ENCODE measurements at regions of chr3 and their contacts with region 1.

Region 1: DNA sequence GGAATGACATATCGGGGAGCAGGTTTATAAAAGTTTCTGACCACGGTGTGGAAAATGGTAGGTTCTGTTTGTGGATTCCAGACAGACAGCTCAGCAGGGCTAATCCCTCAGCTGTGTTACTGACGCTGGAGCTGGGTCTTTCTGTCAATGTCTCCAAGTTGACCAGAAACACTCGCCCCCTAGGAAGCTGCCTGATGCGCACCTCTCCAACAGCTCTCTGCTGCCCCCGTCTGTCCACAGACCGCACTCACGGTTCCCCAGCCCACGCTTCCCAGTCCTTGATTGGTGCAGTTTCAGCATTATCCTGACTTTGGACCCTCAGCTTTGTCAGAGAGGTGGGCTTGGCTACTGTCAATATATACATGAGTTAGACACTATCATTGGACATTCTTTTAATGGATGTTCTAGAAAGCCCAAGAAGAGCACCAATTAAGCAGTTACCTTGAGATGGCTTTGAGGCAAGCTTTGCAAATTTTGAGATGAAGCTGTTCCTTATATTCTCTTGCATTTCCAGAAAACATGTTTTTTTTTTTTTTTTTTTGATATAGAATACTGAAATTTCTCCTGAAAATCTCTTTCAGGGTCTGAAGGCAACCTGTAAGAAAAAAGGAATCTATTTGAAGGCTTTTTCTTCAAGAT is 98.9 kb upstream of the TBC1D5 start:
- DNase-seq: peak; percentile 46
- ATAC-seq: peak; percentile 99
- H3K4me3 ChIP-seq: no peak overlapping the region
- H3K27ac ChIP-seq: no peak overlapping the region
- H3K4me1 ChIP-seq: no peaks in the 10 kb centered on the region
- H3K27me3 ChIP-seq: peaks cover 2% of the 10 kb centered on the region
- CTCF ChIP-seq: peak; percentile 97
- POLR2A ChIP-seq: 0 out of 2 replicates have a peak, but pooled peaks have one; percentile 42
- RAD21 ChIP-seq: peak; percentile 96

Region 2: DNA sequence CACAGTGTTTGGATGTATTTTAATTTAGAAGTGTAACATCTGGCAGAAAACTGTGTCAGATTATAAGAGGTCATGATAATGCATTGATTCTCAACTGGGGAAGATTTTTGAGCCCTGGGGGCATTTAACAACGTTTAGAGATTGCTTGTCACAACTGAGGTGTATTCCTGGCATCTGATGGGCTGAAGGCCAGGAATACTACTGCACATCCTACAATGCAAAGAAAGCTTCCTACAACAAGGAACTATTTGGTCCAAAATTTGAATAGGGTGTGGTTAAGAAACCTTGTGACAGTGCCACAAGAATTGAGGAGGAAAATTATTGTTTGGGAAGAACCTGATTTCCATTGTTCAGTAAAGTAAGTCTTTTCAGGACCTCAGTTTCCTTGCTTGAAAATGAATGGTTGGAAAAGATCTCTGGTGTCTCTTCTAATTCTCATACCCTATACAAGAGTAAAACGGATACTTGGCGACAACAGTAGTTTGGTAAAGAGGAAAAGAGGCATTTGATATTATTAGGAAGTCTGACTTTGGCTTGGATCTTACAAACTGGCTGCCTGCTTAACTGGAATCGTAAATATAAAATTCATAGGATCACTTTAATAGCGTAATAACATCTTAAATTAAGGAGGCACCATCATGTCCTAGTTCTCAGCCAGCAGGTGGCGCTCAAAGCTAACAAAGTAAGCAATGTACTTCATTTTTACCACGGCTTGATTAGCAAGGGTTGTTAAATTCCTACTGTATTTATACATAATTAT is 1240.3 kb before region 1 on chr3:
- CTCF ChIA-PET with region 1: no interaction called
- POLR2A ChIA-PET with region 1: no interaction called
- dilution Hi-C with region 1: no loop called
- in situ Hi-C with region 1: no loop called
- intact Hi-C with region 1: loop called (anchors 5 kb)
- DNase-seq: peak; percentile 81
- ATAC-seq: peak; percentile 79
- H3K4me3 ChIP-seq: no peak overlapping the region
- H3K27ac ChIP-seq: no peak overlapping the region
- H3K4me1 ChIP-seq: no peaks in the 10 kb centered on the region
- H3K27me3 ChIP-seq: peaks cover 3% of the 10 kb centered on the region
- CTCF ChIP-seq: peak; percentile 88
- POLR2A ChIP-seq: no peak
- RAD21 ChIP-seq: peak; percentile 91

Region 3: DNA sequence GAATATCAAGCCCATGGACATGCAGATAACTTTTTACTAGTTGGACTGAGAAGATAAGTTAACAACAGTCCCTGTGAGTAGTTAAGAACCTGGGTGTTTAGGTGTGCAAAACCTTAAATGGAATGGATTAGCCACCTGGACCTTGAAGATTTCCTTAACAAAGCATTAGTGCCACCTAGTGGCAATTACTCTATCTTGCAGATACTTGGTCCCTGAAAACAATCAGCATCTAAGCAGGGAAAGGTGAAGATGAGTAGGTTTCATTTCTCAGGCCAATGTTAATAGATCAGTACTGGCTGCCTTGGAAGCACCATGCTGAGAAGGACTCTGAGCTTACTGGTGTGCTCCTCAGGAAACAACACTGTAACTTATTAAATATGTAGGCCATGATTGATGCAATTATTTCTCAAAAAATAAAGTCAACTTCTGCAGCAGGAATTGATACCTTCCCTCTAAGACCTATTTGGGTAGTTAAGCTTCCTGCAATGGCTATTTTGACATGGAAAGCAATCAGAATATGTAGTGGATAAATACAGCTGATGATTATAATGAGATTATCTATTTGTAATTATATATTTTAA is 428.3 kb before region 1 on chr3:
- CTCF ChIA-PET with region 1: interaction called, 4 read pairs
- POLR2A ChIA-PET with region 1: no interaction called
- dilution Hi-C with region 1: no loop called
- in situ Hi-C with region 1: no loop called
- intact Hi-C with region 1: loop called (anchors 1 kb)
- DNase-seq: peak; percentile 64
- ATAC-seq: peak; percentile 67
- H3K4me3 ChIP-seq: no peak overlapping the region
- H3K27ac ChIP-seq: no peak overlapping the region
- H3K4me1 ChIP-seq: no peaks in the 10 kb centered on the region
- H3K27me3 ChIP-seq: no peaks in the 10 kb centered on the region
- CTCF ChIP-seq: peak; percentile 76
- POLR2A ChIP-seq: no peak
- RAD21 ChIP-seq: peak; percentile 75

Region 4: DNA sequence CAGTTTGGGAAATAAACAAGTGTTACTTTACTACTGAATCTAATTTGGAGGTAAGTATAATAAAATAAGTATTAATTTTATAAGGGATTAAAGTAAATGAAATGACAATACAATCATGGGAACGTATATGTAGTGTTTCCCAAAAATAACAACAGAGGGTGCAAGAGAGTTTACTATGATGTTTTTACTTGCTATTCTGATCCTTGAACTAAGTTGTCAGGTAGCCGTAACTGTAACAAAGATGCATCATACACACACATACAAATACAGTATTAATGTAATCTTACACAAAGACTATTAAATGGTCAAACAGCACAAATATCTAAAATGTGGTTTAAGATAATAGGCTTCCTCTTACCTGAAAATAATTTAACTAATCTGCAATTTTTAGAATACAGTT is 410.3 kb before region 1 on chr3:
- CTCF ChIA-PET with region 1: interaction called, 43 read pairs
- POLR2A ChIA-PET with region 1: no interaction called
- dilution Hi-C with region 1: no loop called
- in situ Hi-C with region 1: loop called (anchors 5 kb)
- intact Hi-C with region 1: loop called (anchors 1 kb)
- DNase-seq: peak; percentile 53
- ATAC-seq: peak; percentile 70; the same call in 1 of the 2 replicates
- H3K4me3 ChIP-seq: no peak overlapping the region
- H3K27ac ChIP-seq: no peak overlapping the region
- H3K4me1 ChIP-seq: no peaks in the 10 kb centered on the region; the same call in 1 of the 2 replicates
- H3K27me3 ChIP-seq: no peaks in the 10 kb centered on the region
- CTCF ChIP-seq: peak; percentile 55
- POLR2A ChIP-seq: no peak
- RAD21 ChIP-seq: peak; percentile 64

Region 5: GRCh38 chr3:17491601-17492000 is 349.7 kb before region 1 on chr3:
- CTCF ChIA-PET with region 1: interaction called, 12 read pairs
- POLR2A ChIA-PET with region 1: no interaction called
- dilution Hi-C with region 1: no loop called
- in situ Hi-C with region 1: no loop called
- intact Hi-C with region 1: no loop called
- DNase-seq: peak; percentile 86
- ATAC-seq: peak; percentile 65
- H3K4me3 ChIP-seq: no peak overlapping the region
- H3K27ac ChIP-seq: no peak overlapping the region
- H3K4me1 ChIP-seq: no peaks in the 10 kb centered on the region; the same call in 1 of the 2 replicates
- H3K27me3 ChIP-seq: no peaks in the 10 kb centered on the region
- CTCF ChIP-seq: no peak
- POLR2A ChIP-seq: no peak
- RAD21 ChIP-seq: no peak

Region 6: GRCh38 chr3:17645072-17645698 is 196.1 kb before region 1 on chr3:
- CTCF ChIA-PET with region 1: interaction called, 15 read pairs
- POLR2A ChIA-PET with region 1: no interaction called
- dilution Hi-C with region 1: no loop called
- in situ Hi-C with region 1: loop called (anchors 10 kb)
- intact Hi-C with region 1: loop called (anchors 1 kb)
- DNase-seq: peak; percentile 76
- ATAC-seq: peak; percentile 77
- H3K4me3 ChIP-seq: no peak overlapping the region
- H3K27ac ChIP-seq: no peak overlapping the region
- H3K4me1 ChIP-seq: peaks cover 1% of the 10 kb centered on the region
- H3K27me3 ChIP-seq: no peaks in the 10 kb centered on the region
- CTCF ChIP-seq: peak; percentile 72
- POLR2A ChIP-seq: no peak
- RAD21 ChIP-seq: peak; percentile 59

Region 7: DNA sequence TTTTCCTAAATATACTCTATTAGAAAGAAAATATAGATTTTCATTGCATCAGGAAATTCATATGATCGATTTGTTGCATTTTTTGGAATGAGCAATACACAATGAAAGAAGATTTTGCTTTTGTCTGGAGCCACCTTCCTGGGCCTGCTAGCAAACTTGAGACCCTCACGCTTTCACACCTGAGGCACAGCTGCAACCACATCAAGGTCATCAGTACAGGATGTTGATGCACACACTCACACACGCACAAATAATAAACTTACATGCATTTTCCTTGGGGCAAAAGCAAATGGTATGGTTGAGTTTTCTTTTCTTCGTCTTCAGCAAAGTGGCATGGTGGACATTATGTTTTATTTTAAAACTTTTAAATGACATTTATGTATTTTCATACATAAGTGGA is 648.6 kb after region 1 on chr3:
- CTCF ChIA-PET with region 1: no interaction called
- POLR2A ChIA-PET with region 1: no interaction called
- dilution Hi-C with region 1: no loop called
- in situ Hi-C with region 1: no loop called
- intact Hi-C with region 1: no loop called
- DNase-seq: no peak
- ATAC-seq: no peak
- H3K4me3 ChIP-seq: no peak overlapping the region
- H3K27ac ChIP-seq: no peak overlapping the region
- H3K4me1 ChIP-seq: no peaks in the 10 kb centered on the region
- H3K27me3 ChIP-seq: no peaks in the 10 kb centered on the region
- CTCF ChIP-seq: no peak
- POLR2A ChIP-seq: no peak
- RAD21 ChIP-seq: no peak

Measured in IMR-90 (cell line).